H1 (cell line): ENCODE measurements at regions of chr12 and their contacts with region 1.

Region 1: DNA sequence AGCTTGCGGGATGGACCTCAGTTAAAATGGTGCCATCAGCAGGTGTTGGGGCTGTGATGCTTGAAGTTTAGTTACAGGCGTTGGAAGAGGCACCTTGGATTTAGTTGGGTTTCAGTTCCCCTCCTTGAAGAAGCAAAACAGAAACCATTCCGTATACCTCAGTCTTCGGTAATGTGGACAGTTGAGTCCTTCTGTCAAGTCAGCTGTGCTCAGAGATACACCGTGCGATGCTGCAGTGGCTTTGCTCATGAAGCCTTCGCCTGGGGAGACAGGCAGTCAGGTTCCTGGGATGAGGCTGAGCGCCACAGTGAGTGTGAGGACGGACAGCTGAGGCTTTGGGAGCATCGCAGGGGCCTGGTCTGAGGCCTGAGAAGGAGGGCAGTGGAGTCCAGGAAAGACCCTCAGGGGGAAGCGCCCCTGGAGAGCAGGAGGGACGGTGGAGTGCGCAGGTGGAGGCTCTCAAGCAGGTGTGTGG is 7.4 kb downstream of the RAN start:
- DNase-seq: peak in 1 of 2 experiments; percentile 53
- H3K4me3 ChIP-seq: no peak overlapping the region
- H3K27ac ChIP-seq: peak overlapping the region; percentile 29; the same call in 1 of the 2 replicates
- H3K4me1 ChIP-seq: peaks cover 0 to 2% (median under 1%) of the 10 kb centered on the region in 4 experiments; a peak in 4 of 7 replicates
- H3K27me3 ChIP-seq: no peaks in the 10 kb centered on the region
- CTCF ChIP-seq: no peak
- EP300 ChIP-seq: no peak
- POLR2A ChIP-seq: peak in 1 of 2 experiments; percentile 57; a peak in 1 of 3 replicates
- RAD21 ChIP-seq: no peak

Region 2: GRCh38 chr12:130813436-130813835 is 65.8 kb before region 1 on chr12:
- CTCF ChIA-PET with region 1: interaction called, 3 read pairs
- POLR2A ChIA-PET with region 1: interaction called, 13 read pairs
- DNase-seq: peak in 1 of 2 experiments; percentile 58
- H3K4me3 ChIP-seq: no peak overlapping the region
- H3K27ac ChIP-seq: no peak overlapping the region; the same call in 1 of the 2 replicates
- H3K4me1 ChIP-seq: peaks cover 6 to 22% (median 18%) of the 10 kb centered on the region in 4 experiments
- H3K27me3 ChIP-seq: no peaks in the 10 kb centered on the region
- CTCF ChIP-seq: peak; percentile 35 to 46 (median 45)
- EP300 ChIP-seq: no peak
- POLR2A ChIP-seq: no peak
- RAD21 ChIP-seq: peak in 1 of 2 experiments; percentile 30; a peak in 1 of 4 replicates

Region 3: GRCh38 chr12:130832561-130833209 is 46.6 kb before region 1 on chr12:
- CTCF ChIA-PET with region 1: interaction called, 9 read pairs
- POLR2A ChIA-PET with region 1: interaction called, 29 read pairs
- DNase-seq: no peak
- H3K4me3 ChIP-seq: no peak overlapping the region; a peak in 1 of 8 replicates
- H3K27ac ChIP-seq: no peak overlapping the region
- H3K4me1 ChIP-seq: peaks cover 5 to 24% (median 13%) of the 10 kb centered on the region in 4 experiments
- H3K27me3 ChIP-seq: no peaks in the 10 kb centered on the region
- CTCF ChIP-seq: no peak
- EP300 ChIP-seq: no peak
- POLR2A ChIP-seq: no peak
- RAD21 ChIP-seq: no peak

Region 4: DNA sequence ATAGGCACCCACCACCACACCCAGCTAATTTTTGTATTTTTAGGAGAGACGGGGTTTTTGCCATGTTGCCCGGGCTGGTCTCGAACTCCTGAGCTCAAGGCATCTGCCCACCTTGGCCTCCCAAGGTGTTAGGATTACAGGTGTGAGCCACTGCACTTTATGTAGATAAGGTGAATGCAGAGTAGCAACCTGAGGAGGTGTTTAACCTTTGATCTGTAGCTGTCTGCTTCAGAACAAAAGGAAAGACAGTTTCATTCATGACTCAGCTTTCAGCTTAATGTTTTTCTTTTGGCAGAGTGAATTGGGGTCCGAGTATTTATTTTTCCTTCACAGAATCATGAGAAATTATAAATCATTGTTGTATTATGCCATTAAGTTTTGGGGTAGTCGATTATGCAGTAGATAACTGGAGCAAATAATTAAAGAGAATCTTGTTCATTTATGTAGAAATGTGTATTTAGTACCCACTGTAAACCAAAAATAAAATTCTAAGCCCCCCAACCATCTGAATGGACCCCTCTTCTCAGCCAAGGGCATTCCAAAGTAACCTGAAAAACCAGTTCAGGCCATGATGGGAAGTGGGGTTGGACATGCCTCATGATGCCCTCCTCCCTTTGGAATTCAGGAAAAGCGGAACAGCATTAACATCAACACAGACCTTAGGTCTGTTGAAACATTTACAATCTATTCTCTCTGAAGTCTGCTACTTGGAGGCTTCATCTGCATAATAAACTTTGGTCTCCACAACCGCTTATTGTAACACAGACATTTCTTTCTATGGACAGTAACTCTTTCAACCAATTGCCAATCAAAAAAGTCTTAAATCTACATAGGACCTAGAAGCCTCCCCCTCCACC is 29.5 kb before region 1 on chr12:
- CTCF ChIA-PET with region 1: no interaction called
- POLR2A ChIA-PET with region 1: interaction called, 86 read pairs
- DNase-seq: no peak
- H3K4me3 ChIP-seq: peak overlapping the region in 1 of 4 experiments; percentile 18; a peak in 2 of 8 replicates
- H3K27ac ChIP-seq: peak overlapping the region; percentile 44
- H3K4me1 ChIP-seq: peaks cover 9 to 13% (median 10%) of the 10 kb centered on the region in 4 experiments; a peak in 6 of 7 replicates
- H3K27me3 ChIP-seq: no peaks in the 10 kb centered on the region
- CTCF ChIP-seq: no peak
- EP300 ChIP-seq: peak in 1 of 2 experiments; percentile 22; a peak in 1 of 3 replicates
- POLR2A ChIP-seq: no peak
- RAD21 ChIP-seq: no peak

Region 5: GRCh38 chr12:130904064-130904463 is 24.8 kb after region 1 on chr12:
- CTCF ChIA-PET with region 1: no interaction called
- POLR2A ChIA-PET with region 1: interaction called, 84 read pairs
- DNase-seq: no peak
- H3K4me3 ChIP-seq: no peak overlapping the region
- H3K27ac ChIP-seq: no peak overlapping the region
- H3K4me1 ChIP-seq: no peaks in the 10 kb centered on the region
- H3K27me3 ChIP-seq: no peaks in the 10 kb centered on the region
- CTCF ChIP-seq: no peak
- EP300 ChIP-seq: no peak
- POLR2A ChIP-seq: no peak
- RAD21 ChIP-seq: no peak

Region 6: DNA sequence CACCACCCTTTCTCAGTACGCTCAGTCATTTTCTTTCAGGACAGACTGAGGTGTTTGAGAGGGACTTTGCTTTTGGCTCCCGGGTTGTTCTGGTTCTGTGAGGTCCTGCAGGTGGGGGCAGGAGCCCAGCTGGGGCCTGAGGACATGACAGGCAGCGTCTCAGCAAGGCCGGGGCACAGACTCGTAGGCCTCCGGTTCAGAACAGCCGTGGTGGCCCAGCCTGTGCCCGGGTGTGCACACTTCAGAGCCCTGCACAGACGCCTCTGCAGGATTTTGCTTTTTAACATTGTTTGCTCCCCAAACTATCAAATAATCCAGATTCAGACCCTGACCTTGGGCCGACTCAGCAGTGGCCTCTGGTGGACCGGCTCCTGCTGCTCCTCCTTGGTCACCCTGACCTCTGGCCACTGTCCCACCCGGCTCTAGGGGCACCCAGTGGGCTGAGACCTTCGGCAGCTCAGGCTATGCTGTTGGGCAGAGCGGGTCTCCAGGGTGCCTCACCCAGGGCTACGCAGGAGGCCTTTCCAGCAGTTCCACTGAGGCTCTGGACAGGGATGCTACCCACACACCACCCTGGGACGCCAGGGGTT is 139.7 kb after region 1 on chr12:
- CTCF ChIA-PET with region 1: no interaction called
- POLR2A ChIA-PET with region 1: no interaction called
- DNase-seq: no peak
- H3K4me3 ChIP-seq: no peak overlapping the region
- H3K27ac ChIP-seq: no peak overlapping the region
- H3K4me1 ChIP-seq: peaks cover 0 to 2% (median under 1%) of the 10 kb centered on the region in 4 experiments; a peak in 1 of 7 replicates
- H3K27me3 ChIP-seq: 0 out of 7 replicates have a peak, but pooled peaks cover 0 to 2% (median 0%) of the 10 kb centered on the region in 4 experiments
- CTCF ChIP-seq: peak in 1 of 3 experiments; percentile 24; a peak in 1 of 4 replicates
- EP300 ChIP-seq: no peak
- POLR2A ChIP-seq: no peak
- RAD21 ChIP-seq: no peak